ENCODE measurements at regions of chr19 and their contacts with region 1.

Region 1: GRCh38 chr19:51259348-51260245 is 8.7 kb downstream of the SIGLECL1 start:
- DNase-seq: peak; percentile 15 to 69
- H3K4me3 ChIP-seq: peak overlapping the region in 1 of 4 experiments; percentile 27; a peak in 1 of 8 replicates
- H3K27ac ChIP-seq: no peak overlapping the region
- H3K4me1 ChIP-seq: peaks cover 0 to 6% (median 5%) of the 10 kb centered on the region in 4 experiments; a peak in 4 of 7 replicates
- H3K27me3 ChIP-seq: no peaks in the 10 kb centered on the region
- CTCF ChIP-seq: peak; percentile 66 to 87 (median 82)
- EP300 ChIP-seq: no peak
- POLR2A ChIP-seq: no peak
- RAD21 ChIP-seq: peak; percentile 82 to 85

Region 2: GRCh38 chr19:51246164-51246552 is 13.4 kb before region 1 on chr19:
- CTCF ChIA-PET with region 1: interaction called, 11 read pairs
- POLR2A ChIA-PET with region 1: no interaction called
- DNase-seq: no peak
- H3K4me3 ChIP-seq: no peak overlapping the region
- H3K27ac ChIP-seq: no peak overlapping the region
- H3K4me1 ChIP-seq: no peaks in the 10 kb centered on the region
- H3K27me3 ChIP-seq: no peaks in the 10 kb centered on the region
- CTCF ChIP-seq: no peak
- EP300 ChIP-seq: no peak
- POLR2A ChIP-seq: no peak
- RAD21 ChIP-seq: no peak

Region 3: DNA sequence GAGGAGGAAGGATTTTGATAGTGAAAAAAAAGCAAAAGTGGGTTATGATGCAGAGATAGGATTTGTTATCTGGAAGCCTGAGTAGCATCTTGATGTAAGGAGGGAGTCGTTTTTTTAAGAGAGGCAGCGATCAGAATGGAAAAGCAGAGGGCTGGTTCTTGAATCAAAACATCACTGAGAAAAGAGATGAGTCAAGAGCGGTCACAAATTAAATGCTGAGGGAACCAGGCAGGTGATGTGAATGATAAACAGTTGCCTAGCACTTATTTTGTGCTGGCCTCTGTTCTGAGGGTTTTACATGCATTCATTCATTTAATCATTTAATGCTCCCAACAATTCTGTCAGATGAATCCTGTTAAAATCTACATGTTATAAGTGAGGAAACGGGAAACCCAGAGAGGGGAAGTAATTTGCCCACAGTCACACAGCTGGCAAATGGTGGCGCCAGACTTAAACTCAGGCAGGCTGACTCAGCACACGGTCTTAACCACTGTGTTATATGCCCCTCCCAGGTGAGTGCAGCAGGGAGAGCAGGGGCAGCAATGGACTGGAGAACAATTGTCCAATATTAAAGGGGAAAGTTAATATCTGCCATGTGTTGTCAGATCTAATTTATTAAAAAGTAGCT is 12.7 kb after region 1 on chr19:
- CTCF ChIA-PET with region 1: interaction called, 42 read pairs
- POLR2A ChIA-PET with region 1: interaction called, 3 read pairs
- DNase-seq: peak in 1 of 2 experiments; percentile 23
- H3K4me3 ChIP-seq: no peak overlapping the region
- H3K27ac ChIP-seq: no peak overlapping the region
- H3K4me1 ChIP-seq: no peaks in the 10 kb centered on the region
- H3K27me3 ChIP-seq: no peaks in the 10 kb centered on the region
- CTCF ChIP-seq: no peak
- EP300 ChIP-seq: no peak
- POLR2A ChIP-seq: no peak
- RAD21 ChIP-seq: no peak